ENCODE measurements at regions of chr4 and their contacts with region 1.

Region 1: DNA sequence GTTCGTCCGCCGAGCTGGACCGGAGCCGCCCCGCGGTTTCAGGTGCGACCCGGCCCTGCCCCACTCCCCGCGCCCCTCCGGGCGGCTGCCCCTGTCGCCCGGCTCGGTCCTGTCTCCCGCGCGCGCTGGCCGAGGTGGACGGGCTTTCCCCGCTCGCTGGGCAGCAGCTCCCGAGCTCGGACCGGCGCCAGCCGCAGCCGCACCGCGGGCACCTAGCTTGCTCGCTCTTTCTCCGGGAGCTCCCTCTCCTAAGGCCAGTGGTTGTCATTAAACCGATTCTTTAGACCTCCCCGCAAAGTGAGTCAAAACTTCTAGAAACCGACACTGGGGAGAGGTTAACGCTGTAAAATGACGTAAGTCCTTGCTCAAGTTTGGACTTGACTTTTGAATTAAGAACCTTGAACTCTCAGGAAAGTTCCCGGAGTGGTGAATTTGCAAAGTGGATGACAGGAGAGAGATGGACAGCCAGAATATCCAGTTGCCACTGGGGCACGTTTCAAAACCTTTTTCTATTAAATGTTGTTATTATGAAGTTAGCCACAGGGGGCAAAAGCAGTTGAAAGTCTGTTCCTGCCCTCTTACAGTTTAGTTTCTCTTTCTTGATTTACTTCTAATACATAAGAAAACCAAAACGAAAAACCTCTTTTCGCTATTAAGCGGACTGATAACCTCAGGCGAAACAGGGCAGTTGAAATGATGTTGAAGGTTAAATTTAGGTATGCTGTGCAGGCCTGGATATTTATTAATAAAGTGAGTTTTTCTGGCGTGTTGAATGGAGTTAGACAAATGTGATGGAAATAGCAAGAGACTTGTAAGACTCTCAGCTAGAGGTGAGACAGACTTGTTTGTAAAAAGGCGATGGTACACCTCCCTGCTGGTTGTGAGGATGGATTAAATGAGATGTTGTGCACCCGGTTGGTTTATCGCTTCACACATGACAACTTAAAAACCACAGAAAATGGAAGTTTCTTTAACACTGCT is 847 bp downstream of the PI4K2B start:
- DNase-seq: peak; percentile 63
- H3K4me3 Mint-ChIP-seq: peak overlapping the region; percentile 92
- H3K27ac Mint-ChIP-seq: peak overlapping the region; percentile 91
- H3K4me1 Mint-ChIP-seq: peaks cover 40% of the 10 kb centered on the region
- H3K27me3 Mint-ChIP-seq: no peaks in the 10 kb centered on the region

Region 2: DNA sequence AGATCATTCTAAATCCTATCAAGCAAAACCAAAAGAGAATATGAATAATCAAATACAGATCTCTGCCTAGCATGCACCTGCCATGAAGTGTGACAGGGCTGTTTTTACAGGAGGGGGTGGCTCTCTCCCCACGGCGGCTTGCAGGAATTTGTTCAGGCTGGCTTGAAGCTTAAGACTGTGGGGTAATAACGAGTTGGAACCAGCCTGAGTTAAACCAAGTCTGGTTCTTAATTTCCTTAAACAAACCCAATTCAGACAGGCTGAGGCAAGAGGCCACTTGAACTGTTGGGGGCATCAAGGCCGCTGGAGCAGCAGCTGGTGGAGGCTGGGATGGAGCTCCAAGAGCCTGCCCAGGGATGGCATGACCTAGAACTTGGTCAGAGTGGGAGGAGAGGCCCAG is 158.8 kb before region 1 on chr4:
- CTCF ChIA-PET with region 1: no interaction called
- intact Hi-C with region 1: no loop called
- DNase-seq: no peak
- H3K4me3 Mint-ChIP-seq: no peak overlapping the region
- H3K27ac Mint-ChIP-seq: no peak overlapping the region
- H3K4me1 Mint-ChIP-seq: no peaks in the 10 kb centered on the region
- H3K27me3 Mint-ChIP-seq: peaks cover 13% of the 10 kb centered on the region

Region 3: GRCh38 chr4:25180524-25181131 is 54.1 kb before region 1 on chr4:
- CTCF ChIA-PET with region 1: interaction called, 7 read pairs
- intact Hi-C with region 1: loop called (anchors 1 kb)
- DNase-seq: peak; percentile 50
- H3K4me3 Mint-ChIP-seq: no peak overlapping the region
- H3K27ac Mint-ChIP-seq: no peak overlapping the region
- H3K4me1 Mint-ChIP-seq: peaks cover 32% of the 10 kb centered on the region
- H3K27me3 Mint-ChIP-seq: no peaks in the 10 kb centered on the region

Region 4: DNA sequence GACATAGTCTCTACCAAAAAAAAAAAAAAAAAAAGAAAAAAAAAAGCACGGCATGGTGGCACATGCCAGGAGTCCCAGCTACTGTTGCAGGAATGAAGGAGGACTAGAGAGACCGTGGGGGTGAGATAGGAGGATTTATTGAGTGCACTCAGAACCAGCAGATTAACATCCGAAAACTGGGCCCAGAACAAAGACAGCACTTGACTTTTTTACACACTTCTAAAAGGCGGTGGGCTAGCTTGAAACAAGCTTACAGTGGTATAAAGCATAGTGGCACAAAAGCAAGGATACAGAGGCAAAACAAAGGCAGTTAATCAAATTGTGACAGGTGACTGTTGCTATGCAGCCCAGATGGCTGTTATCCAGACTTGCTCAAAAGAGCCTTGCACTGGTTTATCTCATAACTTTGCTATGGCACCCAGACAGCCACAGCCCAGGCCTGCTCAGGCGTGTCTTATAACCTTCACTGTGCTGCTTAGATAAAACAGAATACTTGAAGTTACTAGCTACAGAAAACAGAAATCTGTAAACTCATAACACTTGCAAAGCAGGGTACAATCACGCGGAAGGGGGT is 10.8 kb before region 1 on chr4:
- CTCF ChIA-PET with region 1: interaction called, 5 read pairs
- intact Hi-C with region 1: loop called (anchors 1 kb)
- DNase-seq: peak; percentile 17
- H3K4me3 Mint-ChIP-seq: no peak overlapping the region
- H3K27ac Mint-ChIP-seq: no peak overlapping the region
- H3K4me1 Mint-ChIP-seq: no peaks in the 10 kb centered on the region
- H3K27me3 Mint-ChIP-seq: no peaks in the 10 kb centered on the region

Region 5: GRCh38 chr4:25376754-25377571 is 142.3 kb after region 1 on chr4 and contains the start of gene ANAPC4:
- CTCF ChIA-PET with region 1: interaction called, 5 read pairs
- intact Hi-C with region 1: loop called (anchors 1 kb)
- DNase-seq: peak; percentile 95
- H3K4me3 Mint-ChIP-seq: no peak within 1 kb of the TSS
- H3K27ac Mint-ChIP-seq: peak within 1 kb of the TSS; percentile 78
- H3K4me1 Mint-ChIP-seq: peaks cover 9% of the 10 kb centered on the region
- H3K27me3 Mint-ChIP-seq: no peaks in the 10 kb centered on the region
- total RNA-seq, gene ANAPC4: 23.1 to 27.3 TPM

Region 6: DNA sequence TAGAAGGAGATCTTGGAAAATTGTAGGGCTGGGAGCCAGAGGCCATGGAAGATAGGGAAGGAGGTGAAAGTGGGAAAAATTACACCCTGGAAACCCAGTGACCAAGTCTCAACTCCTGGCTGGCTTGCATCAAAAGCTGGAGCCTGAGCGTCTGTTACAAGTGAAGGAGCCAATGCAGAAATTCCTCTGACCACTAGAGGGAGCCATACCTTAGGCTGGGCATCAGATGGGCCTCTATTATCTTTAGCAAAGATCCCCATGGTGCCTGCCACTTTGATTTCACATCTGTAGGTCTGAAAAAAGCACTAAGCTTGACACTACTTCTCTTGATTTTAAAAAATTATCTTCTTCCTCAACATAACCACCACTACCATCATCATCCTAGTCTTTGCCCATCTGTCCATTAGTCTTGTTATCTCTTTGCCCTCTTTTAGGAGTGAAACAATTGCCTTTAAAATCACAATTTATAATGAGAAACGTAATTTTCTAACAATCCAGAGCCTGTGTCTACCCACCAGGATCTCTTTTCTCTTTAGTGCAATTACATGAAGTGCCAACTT is 205.3 kb after region 1 on chr4:
- CTCF ChIA-PET with region 1: no interaction called
- intact Hi-C with region 1: no loop called
- DNase-seq: peak; percentile 77
- H3K4me3 Mint-ChIP-seq: no peak overlapping the region
- H3K27ac Mint-ChIP-seq: no peak overlapping the region
- H3K4me1 Mint-ChIP-seq: no peaks in the 10 kb centered on the region
- H3K27me3 Mint-ChIP-seq: no peaks in the 10 kb centered on the region

Region 7: DNA sequence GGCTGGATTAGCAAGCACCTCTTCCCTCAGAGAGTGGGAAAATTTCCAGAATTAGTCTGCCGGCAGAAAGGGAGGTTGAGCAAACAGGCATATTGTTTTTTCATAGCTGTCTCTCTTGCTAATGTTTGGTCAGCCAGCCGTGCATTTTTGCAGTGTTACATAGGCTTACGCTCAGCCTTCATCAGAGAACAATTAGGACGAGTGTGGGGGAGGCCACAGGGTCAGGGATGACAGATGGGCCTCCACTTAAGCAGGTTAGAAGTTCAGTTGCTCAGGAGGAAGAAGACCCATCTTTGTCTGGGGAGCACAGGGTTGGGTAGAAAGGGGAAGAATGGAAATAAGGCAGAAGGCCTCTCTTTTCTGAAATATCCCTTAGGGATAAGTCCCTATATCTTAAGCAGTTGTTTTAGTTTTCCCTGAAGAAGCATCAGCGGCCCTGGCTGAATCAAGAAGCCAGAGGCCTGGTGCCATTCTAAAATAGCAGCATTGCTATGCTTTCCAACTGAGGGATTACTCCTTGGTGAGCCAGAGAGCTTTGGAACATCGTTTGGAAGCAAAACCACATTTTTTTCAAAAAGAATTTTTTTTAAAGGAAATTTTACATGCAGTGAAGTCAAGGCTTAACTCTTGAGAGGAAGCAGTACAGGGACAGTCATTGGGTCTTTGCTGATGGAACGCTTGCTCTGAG is 798.1 kb after region 1 on chr4:
- CTCF ChIA-PET with region 1: no interaction called
- intact Hi-C with region 1: no loop called
- DNase-seq: no peak
- H3K4me3 Mint-ChIP-seq: no peak overlapping the region
- H3K27ac Mint-ChIP-seq: no peak overlapping the region
- H3K4me1 Mint-ChIP-seq: peaks cover 12% of the 10 kb centered on the region
- H3K27me3 Mint-ChIP-seq: peaks cover 8% of the 10 kb centered on the region